K562 (cell line): ENCODE measurements at regions of chr7 and their contacts with region 1.

Region 1: GRCh38 chr7:101287032-101287431 is 34.6 kb downstream of the IFT22 start:
- DNase-seq: no peak
- ATAC-seq: no peak
- H3K4me3 ChIP-seq: no peak overlapping the region
- H3K27ac ChIP-seq: no peak overlapping the region
- H3K4me1 ChIP-seq: peaks cover 0 to 3% of the 10 kb centered on the region in 2 experiments; a peak in 1 of 5 replicates
- H3K27me3 ChIP-seq: peaks cover 0 to 37% of the 10 kb centered on the region in 2 experiments; a peak in 3 of 5 replicates
- CTCF ChIP-seq: no peak
- EP300 ChIP-seq: no peak
- POLR2A ChIP-seq: no peak
- RAD21 ChIP-seq: no peak

Region 2: DNA sequence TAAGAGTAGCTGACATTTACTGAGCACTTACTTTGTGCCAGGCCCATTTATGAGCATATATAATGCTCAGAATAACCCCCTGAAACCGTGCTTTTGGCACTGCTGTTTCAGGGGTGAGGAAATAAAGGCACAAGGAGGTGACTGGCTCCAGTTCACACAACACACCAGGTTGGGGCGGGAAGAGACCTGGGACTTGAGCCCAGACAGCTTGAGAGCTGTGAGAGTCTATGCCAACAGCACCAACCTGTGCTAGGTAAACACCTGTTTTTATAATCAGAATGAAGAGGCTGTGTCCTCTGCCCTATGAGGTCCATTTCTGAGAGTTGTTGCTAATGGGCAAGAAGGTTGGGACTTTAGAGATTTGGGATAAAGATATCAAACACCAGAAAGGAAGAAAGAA is 1302.4 kb before region 1 on chr7:
- CTCF ChIA-PET with region 1: no interaction called
- POLR2A ChIA-PET with region 1: no interaction called
- in situ Hi-C with region 1: loop called (anchors 5 kb)
- intact Hi-C with region 1: no loop called
- DNase-seq: no peak
- ATAC-seq: no peak
- H3K4me3 ChIP-seq: no peak overlapping the region
- H3K27ac ChIP-seq: no peak overlapping the region
- H3K4me1 ChIP-seq: peaks cover under 1% of the 10 kb centered on the region in 2 experiments; a peak in 2 of 5 replicates
- H3K27me3 ChIP-seq: peaks cover 31 to 68% of the 10 kb centered on the region in 2 experiments
- CTCF ChIP-seq: no peak
- EP300 ChIP-seq: no peak
- POLR2A ChIP-seq: no peak
- RAD21 ChIP-seq: no peak

Region 3: GRCh38 chr7:100889761-100890634 is 397.0 kb before region 1 on chr7:
- CTCF ChIA-PET with region 1: interaction called, 4 read pairs
- POLR2A ChIA-PET with region 1: no interaction called
- in situ Hi-C with region 1: no loop called
- intact Hi-C with region 1: loop called (anchors 5 kb)
- DNase-seq: peak; percentile 96 to 100 (median 97)
- ATAC-seq: peak; percentile 88
- H3K4me3 ChIP-seq: peak overlapping the region; percentile 54
- H3K27ac ChIP-seq: peak overlapping the region; percentile 77
- H3K4me1 ChIP-seq: peaks cover 33 to 91% of the 10 kb centered on the region in 2 experiments
- H3K27me3 ChIP-seq: no peaks in the 10 kb centered on the region
- CTCF ChIP-seq: no peak
- EP300 ChIP-seq: no peak
- POLR2A ChIP-seq: peak; percentile 89
- RAD21 ChIP-seq: no peak

Region 4: DNA sequence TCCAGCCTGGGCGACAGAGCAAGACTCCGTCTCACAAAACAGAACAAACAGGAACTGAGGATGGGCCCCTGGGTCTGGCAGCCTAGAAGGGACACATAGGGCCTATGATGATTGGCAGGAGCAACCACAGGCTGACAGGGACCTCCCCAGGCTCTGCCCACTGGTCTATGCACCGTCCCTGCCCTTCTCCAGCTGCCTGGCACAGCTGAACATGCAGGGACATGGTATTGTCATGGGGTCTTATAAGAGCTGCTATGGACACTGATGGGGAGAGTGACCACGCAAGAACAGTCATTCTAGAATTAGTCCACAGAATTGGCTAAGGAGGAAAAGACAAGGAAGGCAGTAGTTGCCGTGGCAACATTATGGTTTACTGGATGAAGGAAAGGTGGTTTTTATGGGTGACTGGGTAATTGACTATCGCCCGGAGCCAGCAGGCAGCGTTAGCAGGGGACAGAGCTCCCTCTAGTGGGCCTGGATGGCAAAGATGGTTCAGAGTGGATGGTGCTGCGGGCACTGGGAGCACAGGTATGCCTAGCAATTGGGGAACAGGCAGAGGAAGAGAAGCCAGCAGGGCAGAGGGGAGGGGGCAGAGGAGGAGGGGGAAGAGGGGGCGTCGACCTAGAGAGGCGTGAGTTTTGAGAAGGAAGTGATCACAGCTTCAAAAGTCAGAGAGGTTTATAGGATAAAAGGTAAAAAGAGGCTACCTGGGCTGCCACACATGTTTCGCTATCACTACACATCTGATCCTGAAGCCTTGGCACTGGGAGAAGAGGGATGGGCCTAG is 209.5 kb before region 1 on chr7:
- CTCF ChIA-PET with region 1: interaction called, 3 read pairs
- POLR2A ChIA-PET with region 1: no interaction called
- in situ Hi-C with region 1: no loop called
- intact Hi-C with region 1: loop called (anchors 10 kb)
- DNase-seq: peak; percentile 84 to 88 (median 85)
- ATAC-seq: peak; percentile 98
- H3K4me3 ChIP-seq: no peak overlapping the region
- H3K27ac ChIP-seq: no peak overlapping the region
- H3K4me1 ChIP-seq: peaks cover 0 to 4% of the 10 kb centered on the region in 2 experiments; a peak in 2 of 5 replicates
- H3K27me3 ChIP-seq: peaks cover 3 to 15% of the 10 kb centered on the region in 2 experiments; a peak in 3 of 5 replicates
- CTCF ChIP-seq: peak; percentile 95 to 98 (median 97)
- EP300 ChIP-seq: no peak
- POLR2A ChIP-seq: no peak
- RAD21 ChIP-seq: peak; percentile 75 to 90

Region 5: GRCh38 chr7:101138213-101138870 is 148.7 kb before region 1 on chr7:
- CTCF ChIA-PET with region 1: interaction called, 26 read pairs
- POLR2A ChIA-PET with region 1: interaction called, 11 read pairs
- in situ Hi-C with region 1: no loop called
- intact Hi-C with region 1: no loop called
- DNase-seq: peak; percentile 91 to 98 (median 94)
- ATAC-seq: peak; percentile 97
- H3K4me3 ChIP-seq: peak overlapping the region; percentile 33
- H3K27ac ChIP-seq: peak overlapping the region; percentile 98
- H3K4me1 ChIP-seq: peaks cover 24 to 45% of the 10 kb centered on the region in 2 experiments
- H3K27me3 ChIP-seq: no peaks in the 10 kb centered on the region
- CTCF ChIP-seq: peak; percentile 86 to 98 (median 89)
- EP300 ChIP-seq: peak; percentile 89
- POLR2A ChIP-seq: peak; percentile 83
- RAD21 ChIP-seq: peak; percentile 89 to 94

Region 6: DNA sequence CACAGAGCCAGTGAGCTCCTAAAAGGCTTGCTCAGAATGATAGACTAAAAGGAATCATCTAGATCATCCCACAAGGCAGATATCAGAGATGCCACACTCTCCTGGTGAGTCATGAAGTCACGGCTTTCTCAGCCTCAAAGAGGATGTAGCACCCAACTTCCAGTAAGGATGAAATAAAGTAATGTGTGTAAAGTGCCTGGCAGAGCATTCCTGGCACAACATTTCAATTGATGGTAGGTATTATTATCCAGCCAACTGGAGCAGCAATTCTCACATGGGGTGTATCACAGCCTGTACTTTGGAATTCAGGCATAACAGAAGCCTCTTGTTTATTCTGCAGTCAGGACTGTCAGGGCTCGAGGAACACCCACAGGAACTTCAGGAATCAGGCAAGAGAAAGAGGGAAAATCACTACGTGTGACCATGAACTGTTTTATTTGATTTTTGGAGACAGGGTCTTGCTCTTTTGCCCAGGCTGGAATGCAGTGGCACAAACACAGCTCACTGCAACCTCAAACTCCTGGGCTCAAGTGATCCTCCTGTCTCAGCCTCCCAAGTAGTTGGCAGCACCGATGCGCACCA is 101.7 kb before region 1 on chr7:
- CTCF ChIA-PET with region 1: no interaction called
- POLR2A ChIA-PET with region 1: no interaction called
- in situ Hi-C with region 1: no loop called
- intact Hi-C with region 1: loop called (anchors 5 kb)
- DNase-seq: peak in 2 of 4 experiments; percentile 27 to 42
- ATAC-seq: no peak
- H3K4me3 ChIP-seq: no peak overlapping the region
- H3K27ac ChIP-seq: no peak overlapping the region
- H3K4me1 ChIP-seq: peaks cover 6 to 7% of the 10 kb centered on the region in 2 experiments; a peak in 3 of 5 replicates
- H3K27me3 ChIP-seq: peaks cover 2 to 6% of the 10 kb centered on the region in 2 experiments; a peak in 3 of 5 replicates
- CTCF ChIP-seq: no peak
- EP300 ChIP-seq: no peak
- POLR2A ChIP-seq: no peak
- RAD21 ChIP-seq: no peak

Region 7: GRCh38 chr7:101235050-101235449 is 52.0 kb before region 1 on chr7:
- CTCF ChIA-PET with region 1: no interaction called
- POLR2A ChIA-PET with region 1: no interaction called
- in situ Hi-C with region 1: no loop called
- intact Hi-C with region 1: loop called (anchors 2 kb)
- DNase-seq: peak in 3 of 4 experiments; percentile 48 to 67 (median 55)
- ATAC-seq: peak; percentile 61
- H3K4me3 ChIP-seq: no peak overlapping the region
- H3K27ac ChIP-seq: no peak overlapping the region
- H3K4me1 ChIP-seq: peaks cover 20 to 77% of the 10 kb centered on the region in 2 experiments; a peak in 4 of 5 replicates
- H3K27me3 ChIP-seq: no peaks in the 10 kb centered on the region
- CTCF ChIP-seq: peak; percentile 69 to 80 (median 70)
- EP300 ChIP-seq: no peak
- POLR2A ChIP-seq: no peak
- RAD21 ChIP-seq: peak; percentile 23 to 62; a peak in 3 of 4 replicates

Region 8: DNA sequence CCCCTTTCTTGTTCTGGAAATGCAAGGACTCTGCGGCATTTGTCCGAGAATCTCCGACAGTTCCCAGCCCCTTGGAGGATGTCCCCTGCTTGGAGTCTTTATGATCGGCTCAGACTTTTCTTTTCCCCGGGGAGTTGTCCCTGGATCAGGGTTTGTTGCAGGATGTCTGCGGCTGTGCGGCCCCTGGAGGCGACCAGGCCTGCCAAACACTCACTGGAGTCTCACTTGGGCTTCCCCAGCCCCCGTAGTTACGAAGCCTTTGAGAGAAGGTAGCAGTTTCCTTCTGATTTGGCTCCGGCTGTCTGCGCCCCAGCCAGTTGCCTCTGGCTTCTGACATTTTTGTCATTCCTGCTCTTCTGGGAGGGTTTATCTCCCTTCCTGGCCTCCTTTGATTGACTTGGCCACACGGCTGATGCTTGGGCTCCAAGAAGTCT is 91.7 kb after region 1 on chr7:
- CTCF ChIA-PET with region 1: no interaction called
- POLR2A ChIA-PET with region 1: no interaction called
- in situ Hi-C with region 1: no loop called
- intact Hi-C with region 1: no loop called
- DNase-seq: no peak
- ATAC-seq: no peak; the same call in 1 of the 3 replicates
- H3K4me3 ChIP-seq: no peak overlapping the region
- H3K27ac ChIP-seq: no peak overlapping the region
- H3K4me1 ChIP-seq: no peaks in the 10 kb centered on the region
- H3K27me3 ChIP-seq: peaks cover 42 to 49% of the 10 kb centered on the region in 2 experiments
- CTCF ChIP-seq: no peak
- EP300 ChIP-seq: no peak
- POLR2A ChIP-seq: no peak
- RAD21 ChIP-seq: no peak

Region 9: DNA sequence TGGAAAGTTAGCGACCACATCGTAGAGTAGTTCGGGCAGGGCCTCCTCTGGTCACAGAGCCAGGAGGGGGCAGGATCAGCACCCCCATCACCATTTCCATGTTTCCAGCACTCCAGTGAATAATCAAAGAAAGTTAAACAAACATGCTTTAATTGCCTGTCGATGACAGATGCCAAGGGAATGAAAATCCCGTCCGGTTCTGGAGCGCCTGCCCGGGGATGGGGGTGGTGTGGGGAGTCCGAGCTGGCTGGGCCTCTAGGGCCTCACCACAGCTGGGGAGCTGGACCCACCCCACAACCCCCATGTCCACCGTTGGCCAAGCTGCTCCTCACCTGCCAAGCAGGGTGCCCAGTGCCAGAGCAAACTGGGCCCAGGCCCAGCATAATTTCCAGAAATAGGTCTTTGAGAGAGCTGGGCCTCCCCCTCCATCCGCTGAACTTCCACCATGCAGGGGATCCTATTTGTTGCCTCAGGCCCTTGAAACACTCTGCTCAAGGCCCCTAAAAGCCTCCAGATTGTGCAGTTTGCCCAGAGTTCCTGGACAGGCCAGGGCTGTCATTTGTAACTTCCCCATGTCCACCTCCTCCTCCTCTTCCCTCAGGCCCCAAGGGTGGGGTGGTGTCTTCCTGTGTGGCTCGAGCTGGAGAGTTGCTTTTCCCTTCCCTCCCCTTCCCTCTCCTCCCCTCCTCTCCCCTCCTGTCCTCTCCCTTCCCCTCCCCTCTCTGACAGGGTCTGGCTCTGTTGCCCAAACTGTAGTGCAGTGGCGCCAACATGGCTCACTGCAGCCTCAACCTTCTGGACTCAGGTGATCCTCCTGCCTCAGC is 241.0 kb after region 1 on chr7:
- CTCF ChIA-PET with region 1: no interaction called
- POLR2A ChIA-PET with region 1: no interaction called
- in situ Hi-C with region 1: no loop called
- intact Hi-C with region 1: no loop called
- DNase-seq: no peak
- ATAC-seq: no peak; the same call in 2 of the 3 replicates
- H3K4me3 ChIP-seq: no peak overlapping the region
- H3K27ac ChIP-seq: no peak overlapping the region
- H3K4me1 ChIP-seq: peaks cover 0 to 2% of the 10 kb centered on the region in 2 experiments; a peak in 1 of 5 replicates
- H3K27me3 ChIP-seq: peaks cover 7 to 58% of the 10 kb centered on the region in 2 experiments; a peak in 4 of 5 replicates
- CTCF ChIP-seq: no peak
- EP300 ChIP-seq: no peak
- POLR2A ChIP-seq: no peak
- RAD21 ChIP-seq: no peak

Region 10: GRCh38 chr7:101757879-101758278 is 470.8 kb after region 1 on chr7:
- CTCF ChIA-PET with region 1: no interaction called
- POLR2A ChIA-PET with region 1: no interaction called
- in situ Hi-C with region 1: no loop called
- intact Hi-C with region 1: no loop called
- DNase-seq: no peak
- ATAC-seq: no peak
- H3K4me3 ChIP-seq: no peak overlapping the region
- H3K27ac ChIP-seq: no peak overlapping the region
- H3K4me1 ChIP-seq: no peaks in the 10 kb centered on the region
- H3K27me3 ChIP-seq: peaks cover 34 to 71% of the 10 kb centered on the region in 2 experiments
- CTCF ChIP-seq: no peak
- EP300 ChIP-seq: no peak
- POLR2A ChIP-seq: no peak
- RAD21 ChIP-seq: no peak